ENCODE measurements at regions of chr11 and their contacts with region 1.

Region 1: DNA sequence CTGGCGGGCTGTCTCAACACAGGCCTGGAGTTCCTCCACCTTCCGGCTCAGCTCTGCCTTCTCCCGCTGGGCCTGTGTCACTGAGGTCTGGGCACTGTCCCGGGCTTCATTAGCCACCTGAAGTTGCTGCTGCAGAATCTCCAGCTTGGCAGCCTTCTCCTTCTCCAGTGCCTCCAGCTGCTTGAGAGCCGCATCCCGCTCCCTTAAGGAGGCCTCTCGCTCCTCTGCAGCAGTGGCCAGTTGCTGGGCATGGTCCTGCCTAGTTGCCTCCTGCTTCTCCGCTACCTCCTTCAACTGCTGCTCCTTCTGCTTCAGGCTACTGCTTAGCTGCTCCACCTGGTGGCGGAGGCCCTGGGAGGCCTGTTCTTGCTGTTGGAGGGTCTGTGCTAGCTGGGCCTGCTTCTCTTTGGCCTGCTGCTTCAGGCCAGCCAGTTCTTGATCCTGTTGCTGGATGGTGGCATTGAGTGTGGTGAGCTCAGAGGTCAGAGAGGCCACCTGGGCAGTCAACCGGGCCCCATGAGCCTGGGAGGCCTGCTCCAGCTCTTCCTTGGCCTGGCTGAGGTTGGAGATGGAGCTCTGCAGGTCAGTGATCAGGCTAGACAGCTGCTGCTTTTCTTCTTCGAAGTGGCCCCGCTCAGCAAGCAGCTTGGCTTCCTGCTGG is 16.9 kb downstream of the IL18BP start:
- DNase-seq: no peak
- H3K4me3 ChIP-seq: no peak overlapping the region
- H3K27ac ChIP-seq: no peak overlapping the region; a peak in 1 of 4 replicates
- H3K4me1 ChIP-seq: no peaks in the 10 kb centered on the region; a peak in 1 of 4 replicates
- H3K27me3 ChIP-seq: no peaks in the 10 kb centered on the region
- CTCF ChIP-seq: peak; percentile 39; the same call in 1 of the 2 replicates
- EP300 ChIP-seq: no peak
- RAD21 ChIP-seq: peak; percentile 19; the same call in 1 of the 2 replicates

Region 2: GRCh38 chr11:72004936-72005500 is 10.6 kb before region 1 on chr11:
- CTCF ChIA-PET with region 1: interaction called, 11 read pairs
- POLR2A ChIA-PET with region 1: interaction called, 7 read pairs
- DNase-seq: no peak
- H3K4me3 ChIP-seq: no peak overlapping the region
- H3K27ac ChIP-seq: peak overlapping the region in 1 of 2 experiments; percentile 50; a peak in 1 of 4 replicates
- H3K4me1 ChIP-seq: peaks cover 0 to under 1% of the 10 kb centered on the region in 2 experiments; a peak in 1 of 4 replicates
- H3K27me3 ChIP-seq: no peaks in the 10 kb centered on the region
- CTCF ChIP-seq: no peak
- EP300 ChIP-seq: no peak
- RAD21 ChIP-seq: no peak

Region 3: DNA sequence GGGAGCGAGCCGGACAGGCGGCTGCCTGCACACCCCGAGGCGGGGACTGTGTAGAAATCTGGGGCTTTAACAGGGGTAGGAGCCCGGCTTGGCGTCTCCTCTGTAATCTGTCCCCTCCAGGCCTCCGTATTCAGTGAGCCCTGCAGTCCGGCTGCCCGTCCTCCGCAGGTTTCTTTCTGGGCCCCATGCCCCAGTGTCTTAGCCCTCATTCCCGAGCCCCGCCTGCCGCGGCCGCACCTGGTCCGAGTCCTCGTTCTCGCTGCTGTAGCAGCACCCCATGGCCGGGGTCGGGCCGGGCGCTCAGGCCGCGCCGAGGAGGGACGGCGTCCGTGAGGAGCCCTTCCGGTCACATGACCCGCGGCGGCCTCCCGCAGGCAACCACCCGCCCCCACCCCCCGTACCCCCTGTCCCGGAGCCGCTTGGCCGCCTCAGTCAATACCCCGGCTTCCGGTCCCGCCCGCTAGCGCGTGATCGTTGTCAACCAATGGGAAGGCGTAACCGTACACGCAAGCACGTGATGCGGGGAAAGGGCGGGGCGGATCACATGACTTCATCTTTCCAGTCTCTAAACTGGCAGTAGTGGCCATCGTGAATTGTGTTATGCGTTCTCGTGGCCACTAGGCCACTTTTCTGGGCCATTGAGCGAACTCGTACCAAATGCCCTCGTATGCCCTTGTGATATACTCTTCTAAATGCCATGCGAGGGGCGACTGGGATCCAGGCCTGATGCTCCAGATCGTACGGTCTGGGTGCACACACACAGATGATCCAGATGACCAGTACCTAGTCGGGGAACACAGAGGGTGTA is 87.5 kb after region 1 on chr11 and contains the start of gene LAMTOR1:
- CTCF ChIA-PET with region 1: interaction called, 416 read pairs
- POLR2A ChIA-PET with region 1: no interaction called
- DNase-seq: peak; percentile 98
- H3K4me3 ChIP-seq: peak within 1 kb of the TSS; percentile 88 to 89
- H3K27ac ChIP-seq: peak within 1 kb of the TSS; percentile 89 to 97
- H3K4me1 ChIP-seq: peaks cover 4 to 28% of the 10 kb centered on the region in 2 experiments; a peak in 2 of 4 replicates
- H3K27me3 ChIP-seq: no peaks in the 10 kb centered on the region
- CTCF ChIP-seq: peak; percentile 50
- EP300 ChIP-seq: peak; percentile 4 to 31; a peak in 1 of 4 replicates
- RAD21 ChIP-seq: peak; percentile 37
- polyA plus RNA-seq, gene LAMTOR1: 128 and 129 TPM in 2 replicates

Region 4: GRCh38 chr11:72222907-72223614 is 207.4 kb after region 1 on chr11:
- CTCF ChIA-PET with region 1: no interaction called
- POLR2A ChIA-PET with region 1: no interaction called
- DNase-seq: peak; percentile 92
- H3K4me3 ChIP-seq: peak overlapping the region; percentile 96 to 100
- H3K27ac ChIP-seq: peak overlapping the region; percentile 90 to 91
- H3K4me1 ChIP-seq: peaks cover 5 to 31% of the 10 kb centered on the region in 2 experiments; a peak in 3 of 4 replicates
- H3K27me3 ChIP-seq: no peaks in the 10 kb centered on the region
- CTCF ChIP-seq: no peak
- EP300 ChIP-seq: peak in 1 of 2 experiments; percentile 41; a peak in 1 of 4 replicates
- RAD21 ChIP-seq: no peak